ENCODE measurements at regions of chr9 and their contacts with region 1.

Region 1: DNA sequence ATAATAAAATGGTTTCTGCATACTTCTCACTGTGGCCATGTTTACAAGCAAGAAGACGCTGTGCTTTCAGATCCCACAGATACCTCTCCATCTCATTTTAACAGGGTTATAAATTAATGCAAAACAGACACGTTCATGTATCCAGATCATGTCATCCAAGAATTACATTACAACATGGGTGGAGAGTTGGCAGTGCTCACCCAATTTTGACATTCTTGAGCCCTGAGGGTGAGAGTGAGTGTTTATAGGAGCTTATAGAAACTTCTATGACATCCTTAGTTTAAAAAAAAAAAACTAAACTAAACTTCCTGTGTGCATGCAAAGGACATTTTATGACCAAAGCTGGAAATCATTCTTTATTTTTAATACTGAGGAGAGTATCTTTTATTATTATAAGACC is 9.1 kb downstream of the PRKACG start:
- DNase-seq: no peak
- ATAC-seq: no peak
- H3K4me3 ChIP-seq: no peak overlapping the region
- H3K27ac ChIP-seq: no peak overlapping the region
- H3K4me1 ChIP-seq: peaks cover 0 to 7% (median 0%) of the 10 kb centered on the region in 9 donors
- H3K27me3 ChIP-seq: no peaks in the 10 kb centered on the region
- CTCF ChIP-seq: no peak

Region 2: GRCh38 chr9:68577774-68578591 is 426.9 kb before region 1 on chr9:
- intact Hi-C with region 1: loop called in 3 of 10 experiments (anchors 5 to 10 kb)
- DNase-seq: no peak
- ATAC-seq: no peak
- H3K4me3 ChIP-seq: no peak overlapping the region
- H3K27ac ChIP-seq: no peak overlapping the region
- H3K4me1 ChIP-seq: no peaks in the 10 kb centered on the region
- H3K27me3 ChIP-seq: no peaks in the 10 kb centered on the region
- CTCF ChIP-seq: no peak

Region 3: DNA sequence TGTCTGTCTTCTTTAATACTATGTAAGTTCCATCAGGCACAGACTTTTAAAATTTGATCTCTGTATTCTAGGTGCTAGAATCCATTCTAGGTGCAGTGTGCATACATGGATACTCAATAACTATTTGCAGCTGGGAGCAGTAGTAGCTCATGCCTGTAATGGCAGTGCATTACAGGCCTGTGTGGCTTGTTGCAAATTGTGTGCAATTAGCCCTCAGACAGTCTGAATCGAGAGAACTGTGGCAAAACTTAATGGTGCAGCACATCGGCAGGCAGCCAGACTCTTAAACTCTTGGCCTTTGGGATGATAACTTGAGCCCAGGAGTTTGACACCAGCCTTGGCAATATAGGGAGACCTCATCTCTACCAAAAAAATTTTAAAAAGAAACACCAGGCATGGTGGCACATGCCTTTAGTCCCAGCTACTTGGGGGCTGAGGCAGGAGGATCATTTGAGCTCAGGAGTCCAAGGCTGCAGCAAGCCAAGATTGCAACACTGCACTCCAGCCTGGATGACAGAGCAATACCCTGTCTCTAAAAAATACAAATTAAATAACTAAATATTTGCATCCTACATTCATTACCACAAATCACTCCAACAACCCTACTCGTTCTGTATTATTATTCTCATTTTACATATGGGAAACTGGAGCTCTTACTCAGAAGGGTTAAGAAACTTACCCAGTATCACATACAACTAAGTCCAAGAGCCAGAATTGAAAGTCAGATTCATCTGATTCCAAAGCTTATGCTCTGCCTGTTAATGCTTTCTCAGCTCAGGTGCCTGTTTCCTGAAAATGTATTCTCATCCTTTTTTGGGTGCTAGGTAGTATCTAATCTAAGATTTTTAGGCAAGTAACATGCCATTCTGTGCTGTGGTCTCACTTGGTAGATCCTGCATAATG is 21.1 kb before region 1 on chr9:
- intact Hi-C with region 1: loop called in 1 of 10 experiments (anchors 2 kb)
- DNase-seq: no peak
- ATAC-seq: no peak
- H3K4me3 ChIP-seq: no peak overlapping the region
- H3K27ac ChIP-seq: peak overlapping the region in 9 of 10 donors; percentile 46 to 89 (median 81)
- H3K4me1 ChIP-seq: peaks cover 6 to 57% (median 40%) of the 10 kb centered on the region in 9 donors
- H3K27me3 ChIP-seq: no peaks in the 10 kb centered on the region
- CTCF ChIP-seq: no peak

Measured in heart right ventricle (tissue), 16 donors.